ENCODE measurements at regions of chr5 and their contacts with region 1.

Region 1: GRCh38 chr5:102536323-102536928 is 37.6 kb upstream of the SLCO6A1 start:
- H3K4me3 Mint-ChIP-seq: no peak overlapping the region
- H3K27ac Mint-ChIP-seq: no peak overlapping the region
- H3K4me1 Mint-ChIP-seq: no peaks in the 10 kb centered on the region
- H3K27me3 Mint-ChIP-seq: peaks cover 13% of the 10 kb centered on the region

Region 2: GRCh38 chr5:102561894-102562760 is 25.7 kb after region 1 on chr5:
- intact Hi-C with region 1: loop called (anchors 2 kb)
- H3K4me3 Mint-ChIP-seq: no peak overlapping the region
- H3K27ac Mint-ChIP-seq: no peak overlapping the region
- H3K4me1 Mint-ChIP-seq: no peaks in the 10 kb centered on the region
- H3K27me3 Mint-ChIP-seq: no peaks in the 10 kb centered on the region